ENCODE measurements at regions of chr1 and their contacts with region 1.

Region 1: GRCh38 chr1:113140588-113141446 is 67.8 kb downstream of the LRIG2 start:
- DNase-seq: no peak
- H3K4me3 ChIP-seq: peak overlapping the region in 1 of 8 donors; percentile 31
- H3K27ac ChIP-seq: peak overlapping the region in 1 of 8 donors; percentile 42
- H3K4me1 ChIP-seq: peaks cover 3 to 26% (median 13%) of the 10 kb centered on the region in 6 donors
- H3K27me3 ChIP-seq: no peaks in the 10 kb centered on the region
- CTCF ChIP-seq: peak; percentile 50 to 80 (median 74)
- POLR2A ChIP-seq: no peak

Region 2: GRCh38 chr1:113031171-113031933 is 109.5 kb before region 1 on chr1:
- intact Hi-C with region 1: no loop called
- DNase-seq: no peak
- H3K4me3 ChIP-seq: no peak overlapping the region
- H3K27ac ChIP-seq: peak overlapping the region in 5 of 8 donors; percentile 3 to 49 (median 31)
- H3K4me1 ChIP-seq: peaks cover 0 to 7% (median 2%) of the 10 kb centered on the region in 6 donors
- H3K27me3 ChIP-seq: no peaks in the 10 kb centered on the region
- CTCF ChIP-seq: no peak
- POLR2A ChIP-seq: no peak

Region 3: GRCh38 chr1:113109908-113110554 is 30.8 kb before region 1 on chr1:
- intact Hi-C with region 1: no loop called
- DNase-seq: no peak
- H3K4me3 ChIP-seq: no peak overlapping the region
- H3K27ac ChIP-seq: no peak overlapping the region
- H3K4me1 ChIP-seq: no peaks in the 10 kb centered on the region
- H3K27me3 ChIP-seq: no peaks in the 10 kb centered on the region
- CTCF ChIP-seq: no peak
- POLR2A ChIP-seq: no peak

Region 4: GRCh38 chr1:113452921-113453770 is 312.3 kb after region 1 on chr1:
- intact Hi-C with region 1: loop called (anchors 10 kb)
- DNase-seq: no peak
- H3K4me3 ChIP-seq: no peak overlapping the region
- H3K27ac ChIP-seq: no peak overlapping the region
- H3K4me1 ChIP-seq: no peaks in the 10 kb centered on the region
- H3K27me3 ChIP-seq: no peaks in the 10 kb centered on the region
- CTCF ChIP-seq: peak in 6 of 11 experiments; percentile 1 to 44 (median 28)
- POLR2A ChIP-seq: no peak

Region 5: DNA sequence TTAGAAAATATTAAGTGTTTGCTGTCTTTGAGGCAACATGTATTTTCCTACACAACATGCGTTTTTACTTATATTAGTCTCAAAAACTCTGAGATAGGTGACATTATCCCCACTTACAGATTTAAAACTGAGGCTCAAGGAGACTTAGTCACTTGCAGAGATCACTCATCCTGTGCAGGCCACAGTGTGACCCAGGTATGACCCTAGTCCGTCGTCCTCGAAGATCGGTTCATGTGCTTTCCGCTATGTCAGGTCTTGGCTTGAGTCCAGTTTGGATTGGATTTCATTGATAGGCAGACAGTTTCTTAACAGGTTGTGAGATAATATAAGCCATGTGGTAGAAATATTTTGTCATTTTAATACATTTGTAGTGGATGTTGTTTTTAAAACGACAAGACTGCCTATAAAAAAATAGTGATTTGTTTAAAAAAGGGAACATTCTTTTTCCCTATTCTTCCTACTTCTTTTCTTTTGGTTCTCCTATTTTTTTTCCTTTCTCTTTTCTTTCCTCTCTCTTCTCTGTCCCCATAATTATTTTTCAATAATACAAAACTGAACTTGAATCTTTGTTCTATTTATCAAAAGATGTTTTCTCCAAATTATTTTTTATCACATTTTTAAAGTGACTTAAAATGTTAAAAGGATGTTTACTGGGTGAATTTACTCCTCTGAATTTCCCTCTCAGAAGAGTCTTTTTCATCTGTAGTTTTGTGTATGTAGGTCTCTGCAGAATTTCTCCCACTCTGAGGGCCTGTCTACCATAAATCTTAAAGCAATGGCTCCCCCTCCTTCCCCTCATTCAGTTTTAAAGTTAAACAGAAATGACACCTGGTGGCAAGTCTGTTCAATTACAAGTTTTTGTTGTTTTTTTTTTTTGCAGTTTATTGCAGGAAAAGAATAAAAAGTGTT is 536.7 kb after region 1 on chr1:
- intact Hi-C with region 1: loop called (anchors 5 kb)
- DNase-seq: no peak
- H3K4me3 ChIP-seq: no peak overlapping the region
- H3K27ac ChIP-seq: no peak overlapping the region
- H3K4me1 ChIP-seq: peaks cover 0 to 9% (median 6%) of the 10 kb centered on the region in 6 donors
- H3K27me3 ChIP-seq: no peaks in the 10 kb centered on the region
- CTCF ChIP-seq: peak in 9 of 11 experiments; percentile 22 to 67 (median 47)
- POLR2A ChIP-seq: no peak

Region 6: DNA sequence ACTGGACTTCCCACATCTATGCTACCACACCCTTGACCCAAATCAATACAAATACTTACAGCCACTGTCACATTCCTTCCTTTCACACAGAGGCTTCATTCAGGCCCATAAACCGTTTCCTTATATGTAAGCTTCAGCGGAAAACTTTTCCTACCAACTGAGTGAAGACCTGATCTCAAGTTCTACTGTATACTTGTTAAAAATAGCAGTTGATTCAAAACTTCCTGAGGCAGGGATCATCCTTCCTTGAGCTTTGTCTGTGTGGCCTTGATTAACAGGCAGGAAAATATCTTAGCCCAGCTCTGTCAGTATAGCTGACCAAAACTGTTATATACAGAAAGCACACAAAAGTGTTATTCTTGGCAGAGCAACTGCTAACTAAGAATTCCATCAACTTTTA is 1486.3 kb after region 1 on chr1:
- intact Hi-C with region 1: no loop called
- DNase-seq: no peak
- H3K4me3 ChIP-seq: no peak overlapping the region
- H3K27ac ChIP-seq: no peak overlapping the region
- H3K4me1 ChIP-seq: no peaks in the 10 kb centered on the region
- H3K27me3 ChIP-seq: peaks cover 0 to 10% (median 0%) of the 10 kb centered on the region in 7 donors
- CTCF ChIP-seq: no peak
- POLR2A ChIP-seq: no peak

Measured in spleen (tissue), 13 donors.